GM10248 (cell line): ENCODE measurements at regions of chr5 and their contacts with region 1.

Region 1: GRCh38 chr5:56270568-56271392 is 37.6 kb upstream of the ANKRD55 start:
- DNase-seq: peak; percentile 72
- CTCF ChIP-seq: peak; percentile 98

Region 2: GRCh38 chr5:55936100-55936693 is 334.6 kb before region 1 on chr5:
- CTCF ChIA-PET with region 1: interaction called, 23 read pairs
- POLR2A ChIA-PET with region 1: no interaction called
- DNase-seq: peak; percentile 62
- CTCF ChIP-seq: peak; percentile 86

Region 3: GRCh38 chr5:56211298-56211865 is 59.4 kb before region 1 on chr5:
- CTCF ChIA-PET with region 1: no interaction called
- POLR2A ChIA-PET with region 1: no interaction called
- DNase-seq: no peak
- CTCF ChIP-seq: no peak

Region 4: DNA sequence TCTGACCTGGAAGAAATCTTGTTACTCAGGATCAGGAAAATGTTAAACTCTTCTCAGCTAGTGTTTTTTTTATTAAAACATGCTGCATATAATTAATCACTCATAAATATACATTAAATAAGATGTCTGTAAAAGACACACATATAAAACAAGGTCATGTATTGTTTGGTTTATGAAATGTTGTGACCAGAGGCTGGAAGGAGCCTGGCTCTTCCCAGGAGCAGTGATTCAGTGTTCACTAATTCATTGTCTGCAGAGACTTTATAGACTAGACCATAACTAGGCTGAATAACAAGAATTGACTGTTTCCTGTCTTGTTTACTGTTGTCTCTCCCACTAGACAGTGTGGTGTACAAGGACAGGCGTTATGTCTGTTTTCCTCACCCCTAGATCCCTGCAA is 11.4 kb after region 1 on chr5:
- CTCF ChIA-PET with region 1: interaction called, 21 read pairs
- POLR2A ChIA-PET with region 1: no interaction called
- DNase-seq: no peak
- CTCF ChIP-seq: no peak

Region 5: GRCh38 chr5:56827049-56827448 is 556.3 kb after region 1 on chr5:
- CTCF ChIA-PET with region 1: interaction called, 16 read pairs
- POLR2A ChIA-PET with region 1: no interaction called
- DNase-seq: no peak
- CTCF ChIP-seq: no peak

Region 6: DNA sequence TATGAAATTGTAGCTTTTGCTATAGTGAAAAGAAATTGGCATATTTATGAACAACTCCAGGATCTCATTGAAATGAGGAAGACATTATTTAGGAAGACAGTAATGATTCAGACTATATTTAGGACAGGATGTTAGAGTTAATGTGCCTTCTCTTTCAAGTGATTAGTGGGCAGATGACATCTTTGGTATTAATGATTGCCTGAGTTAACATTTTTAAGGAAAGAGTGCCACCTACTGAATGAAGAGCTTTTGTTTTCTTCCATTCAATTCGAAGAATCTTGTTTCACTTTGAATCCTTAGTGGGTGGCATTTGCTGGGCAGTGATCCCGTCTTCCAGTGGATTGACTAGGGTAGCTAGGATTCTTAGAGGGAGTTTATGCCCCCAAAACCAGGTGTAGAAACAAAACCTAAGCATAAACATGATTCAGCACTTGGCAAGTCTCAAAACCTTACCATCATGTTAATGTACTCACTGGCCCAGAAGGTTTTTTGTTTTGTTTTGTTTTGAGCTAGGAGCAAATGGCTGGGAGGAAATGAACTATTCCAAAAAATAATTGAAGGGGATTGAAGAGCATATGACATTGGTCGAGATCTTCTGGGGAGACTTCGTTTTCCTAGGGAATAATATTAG is 567.7 kb after region 1 on chr5:
- CTCF ChIA-PET with region 1: interaction called, 105 read pairs
- POLR2A ChIA-PET with region 1: no interaction called
- DNase-seq: peak; percentile 28
- CTCF ChIP-seq: peak; percentile 35

Region 7: GRCh38 chr5:57137401-57137800 is 866.6 kb after region 1 on chr5:
- CTCF ChIA-PET with region 1: interaction called, 18 read pairs
- POLR2A ChIA-PET with region 1: no interaction called
- DNase-seq: no peak
- CTCF ChIP-seq: no peak